ENCODE measurements at regions of chr21 and their contacts with region 1.

Region 1: GRCh38 chr21:36028127-36029069 is 31.9 kb downstream of the SETD4 start:
- DNase-seq: peak; percentile 64
- ATAC-seq: peak; percentile 98
- H3K4me3 ChIP-seq: no peak overlapping the region
- H3K27ac ChIP-seq: no peak overlapping the region
- H3K4me1 ChIP-seq: peaks cover 0 to 2% of the 10 kb centered on the region in 2 experiments; a peak in 1 of 4 replicates
- H3K27me3 ChIP-seq: no peaks in the 10 kb centered on the region
- CTCF ChIP-seq: peak; percentile 52 to 98 (median 94); a peak in 5 of 6 replicates
- POLR2A ChIP-seq: no peak
- RAD21 ChIP-seq: peak; percentile 89

Region 2: DNA sequence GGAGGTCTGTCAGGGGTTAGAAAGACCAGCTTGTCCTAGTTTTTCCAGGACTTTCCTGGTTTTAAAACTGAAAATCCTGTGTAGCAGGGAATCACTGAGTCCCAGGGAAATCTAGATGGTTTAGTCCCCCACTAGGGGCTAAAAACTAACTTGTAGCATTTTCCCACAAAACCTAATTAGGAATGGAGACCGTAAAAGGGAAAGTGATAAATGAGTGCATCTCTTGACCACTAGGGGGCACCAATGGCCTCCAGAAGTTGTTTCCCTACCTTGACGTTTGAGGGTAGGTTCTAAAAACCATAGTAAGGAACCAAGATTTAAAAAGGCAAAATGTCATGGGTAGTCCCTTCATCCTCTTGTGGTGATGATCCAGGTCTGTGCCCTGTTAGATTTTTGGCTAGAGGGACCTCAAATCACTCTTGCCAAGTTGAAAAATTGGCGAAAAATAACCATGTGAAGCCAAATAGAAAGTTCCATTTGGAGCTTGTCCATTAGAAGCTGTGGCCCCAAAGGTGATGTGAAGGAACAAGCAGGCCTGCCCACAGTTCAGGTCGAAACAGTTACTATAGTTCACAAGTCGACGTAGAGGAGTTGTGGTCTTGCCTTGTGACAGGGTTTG is 1335.1 kb before region 1 on chr21:
- CTCF ChIA-PET with region 1: no interaction called
- POLR2A ChIA-PET with region 1: no interaction called
- RAD21 ChIA-PET with region 1: no interaction called
- intact Hi-C with region 1: loop called (anchors 5 kb)
- DNase-seq: peak; percentile 59
- ATAC-seq: peak; percentile 73
- H3K4me3 ChIP-seq: no peak overlapping the region
- H3K27ac ChIP-seq: no peak overlapping the region
- H3K4me1 ChIP-seq: peaks cover 10 to 15% of the 10 kb centered on the region in 2 experiments
- H3K27me3 ChIP-seq: peaks cover 3% of the 10 kb centered on the region; the same call in 1 of the 2 replicates
- CTCF ChIP-seq: peak; percentile 35 to 87 (median 78); a peak in 5 of 6 replicates
- POLR2A ChIP-seq: no peak
- RAD21 ChIP-seq: peak; percentile 76

Region 3: GRCh38 chr21:34908419-34909055 is 1119.9 kb before region 1 on chr21:
- CTCF ChIA-PET with region 1: no interaction called
- POLR2A ChIA-PET with region 1: no interaction called
- RAD21 ChIA-PET with region 1: no interaction called
- intact Hi-C with region 1: no loop called
- DNase-seq: no peak
- ATAC-seq: no peak
- H3K4me3 ChIP-seq: no peak overlapping the region
- H3K27ac ChIP-seq: no peak overlapping the region
- H3K4me1 ChIP-seq: no peaks in the 10 kb centered on the region
- H3K27me3 ChIP-seq: no peaks in the 10 kb centered on the region; the same call in 1 of the 2 replicates
- CTCF ChIP-seq: no peak
- POLR2A ChIP-seq: no peak
- RAD21 ChIP-seq: no peak

Region 4: DNA sequence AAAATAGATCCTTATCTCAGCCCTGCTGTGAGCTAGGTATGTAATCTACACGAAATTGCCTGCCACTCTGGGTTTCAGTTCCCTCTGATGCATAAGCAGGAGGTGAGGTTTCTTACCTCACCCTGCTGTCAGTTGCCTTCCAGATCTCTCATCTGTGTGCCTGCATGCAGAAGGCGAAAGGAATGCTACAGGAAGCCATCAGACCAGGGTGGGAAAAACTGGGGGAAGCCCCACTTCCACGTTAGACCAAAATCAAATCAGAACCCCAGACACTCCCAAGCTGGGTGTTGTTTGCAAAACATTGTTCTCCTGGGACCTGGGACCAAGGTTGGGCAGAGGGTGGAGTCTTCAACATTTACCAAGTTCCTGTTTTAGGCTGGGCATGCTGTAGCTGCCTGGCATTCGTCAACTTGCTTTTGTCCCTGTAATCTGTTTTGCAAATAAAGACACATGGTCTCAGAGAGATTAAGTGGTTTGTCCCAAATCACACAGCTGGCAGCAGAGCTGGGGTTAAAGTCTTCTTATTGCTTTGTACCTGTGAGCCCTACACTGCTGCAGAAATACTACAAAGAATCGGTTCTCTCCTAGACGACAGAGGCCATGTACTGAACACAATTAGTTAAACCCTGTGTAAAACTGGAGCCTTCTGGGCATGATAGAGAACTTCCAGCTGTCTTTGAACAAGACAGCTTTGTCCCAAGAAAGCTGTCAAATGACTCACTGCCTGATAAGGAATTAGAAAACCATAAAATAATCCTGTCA is 589.6 kb before region 1 on chr21:
- CTCF ChIA-PET with region 1: no interaction called
- POLR2A ChIA-PET with region 1: no interaction called
- RAD21 ChIA-PET with region 1: no interaction called
- intact Hi-C with region 1: loop called (anchors 10 kb)
- DNase-seq: no peak
- ATAC-seq: no peak
- H3K4me3 ChIP-seq: no peak overlapping the region
- H3K27ac ChIP-seq: no peak overlapping the region
- H3K4me1 ChIP-seq: no peaks in the 10 kb centered on the region
- H3K27me3 ChIP-seq: no peaks in the 10 kb centered on the region
- CTCF ChIP-seq: no peak
- POLR2A ChIP-seq: no peak
- RAD21 ChIP-seq: no peak

Region 5: GRCh38 chr21:36047139-36047538 is 18.7 kb after region 1 on chr21:
- CTCF ChIA-PET with region 1: no interaction called
- POLR2A ChIA-PET with region 1: no interaction called
- RAD21 ChIA-PET with region 1: no interaction called
- intact Hi-C with region 1: no loop called
- DNase-seq: no peak
- ATAC-seq: no peak
- H3K4me3 ChIP-seq: no peak overlapping the region
- H3K27ac ChIP-seq: no peak overlapping the region
- H3K4me1 ChIP-seq: no peaks in the 10 kb centered on the region
- H3K27me3 ChIP-seq: no peaks in the 10 kb centered on the region
- CTCF ChIP-seq: no peak
- POLR2A ChIP-seq: no peak
- RAD21 ChIP-seq: no peak

Region 6: DNA sequence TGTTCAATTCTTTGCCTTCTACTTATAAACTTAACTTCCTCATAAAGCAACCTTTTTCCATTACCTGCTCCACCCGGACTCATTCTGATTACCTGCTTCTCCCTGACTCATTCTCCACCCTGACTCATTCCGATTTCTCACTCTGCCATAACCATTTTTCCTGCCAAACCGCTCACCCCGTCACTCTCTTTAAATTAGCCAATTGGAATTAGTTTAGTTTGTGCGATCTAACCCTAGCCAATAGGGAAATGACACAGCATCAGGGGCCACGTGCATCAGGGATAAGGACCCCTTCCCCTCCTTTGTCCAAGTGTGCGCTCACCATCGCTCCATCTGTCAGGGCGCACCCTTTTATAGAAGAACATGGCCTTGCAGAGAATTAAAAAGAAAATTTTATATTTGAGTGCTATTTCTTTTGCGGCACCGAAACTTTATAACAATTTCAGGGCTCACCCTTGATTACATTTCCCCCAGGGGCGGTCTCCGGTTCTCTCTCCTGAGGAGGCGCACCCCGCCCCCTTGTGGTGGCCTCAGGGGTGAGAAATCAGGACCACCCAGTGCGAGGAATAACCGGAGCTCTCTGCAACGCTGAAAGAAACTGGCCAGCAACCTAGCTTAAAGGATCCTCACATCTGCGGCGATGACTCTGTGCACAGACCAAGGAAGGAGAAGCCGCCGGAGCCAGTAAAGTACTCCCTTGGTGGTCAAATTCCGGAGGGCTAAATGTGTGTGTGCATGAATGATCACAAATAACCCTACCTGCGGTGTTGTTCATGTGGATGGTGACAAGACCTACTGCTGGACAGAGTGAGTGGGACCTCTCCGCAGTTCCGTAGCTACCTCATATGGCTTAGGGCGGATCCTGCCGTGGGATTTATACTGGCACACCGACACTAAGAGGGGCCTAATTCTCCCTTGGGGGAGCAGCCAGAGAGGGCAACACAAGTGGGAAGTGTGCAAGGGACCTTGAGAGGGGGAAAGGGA is 76.2 kb after region 1 on chr21:
- CTCF ChIA-PET with region 1: no interaction called
- POLR2A ChIA-PET with region 1: no interaction called
- RAD21 ChIA-PET with region 1: no interaction called
- intact Hi-C with region 1: no loop called
- DNase-seq: peak; percentile 24
- ATAC-seq: 0 out of 2 replicates have a peak, but pooled peaks have one; percentile 27
- H3K4me3 ChIP-seq: no peak overlapping the region
- H3K27ac ChIP-seq: no peak overlapping the region
- H3K4me1 ChIP-seq: peaks cover 0 to 8% of the 10 kb centered on the region in 2 experiments; a peak in 2 of 4 replicates
- H3K27me3 ChIP-seq: no peaks in the 10 kb centered on the region
- CTCF ChIP-seq: peak in 2 of 3 experiments; percentile 36 to 41; a peak in 3 of 6 replicates
- POLR2A ChIP-seq: no peak
- RAD21 ChIP-seq: no peak